Heart right ventricle (tissue), 16 donors: ENCODE measurements at regions of chrX and their contacts with region 1.

Region 1: GRCh38 chrX:101595739-101596419 is 21.9 kb downstream of the ARMCX6 start:
- DNase-seq: peak in 1 of 2 donors; percentile 49
- ATAC-seq: peak in 7 of 8 donors; percentile 46 to 73 (median 63)
- H3K4me3 ChIP-seq: no peak overlapping the region
- H3K27ac ChIP-seq: no peak overlapping the region
- H3K4me1 ChIP-seq: no peaks in the 10 kb centered on the region
- H3K27me3 ChIP-seq: peaks cover 0 to 28% (median 0%) of the 10 kb centered on the region in 7 donors
- CTCF ChIP-seq: peak; percentile 25 to 68 (median 57)

Region 2: DNA sequence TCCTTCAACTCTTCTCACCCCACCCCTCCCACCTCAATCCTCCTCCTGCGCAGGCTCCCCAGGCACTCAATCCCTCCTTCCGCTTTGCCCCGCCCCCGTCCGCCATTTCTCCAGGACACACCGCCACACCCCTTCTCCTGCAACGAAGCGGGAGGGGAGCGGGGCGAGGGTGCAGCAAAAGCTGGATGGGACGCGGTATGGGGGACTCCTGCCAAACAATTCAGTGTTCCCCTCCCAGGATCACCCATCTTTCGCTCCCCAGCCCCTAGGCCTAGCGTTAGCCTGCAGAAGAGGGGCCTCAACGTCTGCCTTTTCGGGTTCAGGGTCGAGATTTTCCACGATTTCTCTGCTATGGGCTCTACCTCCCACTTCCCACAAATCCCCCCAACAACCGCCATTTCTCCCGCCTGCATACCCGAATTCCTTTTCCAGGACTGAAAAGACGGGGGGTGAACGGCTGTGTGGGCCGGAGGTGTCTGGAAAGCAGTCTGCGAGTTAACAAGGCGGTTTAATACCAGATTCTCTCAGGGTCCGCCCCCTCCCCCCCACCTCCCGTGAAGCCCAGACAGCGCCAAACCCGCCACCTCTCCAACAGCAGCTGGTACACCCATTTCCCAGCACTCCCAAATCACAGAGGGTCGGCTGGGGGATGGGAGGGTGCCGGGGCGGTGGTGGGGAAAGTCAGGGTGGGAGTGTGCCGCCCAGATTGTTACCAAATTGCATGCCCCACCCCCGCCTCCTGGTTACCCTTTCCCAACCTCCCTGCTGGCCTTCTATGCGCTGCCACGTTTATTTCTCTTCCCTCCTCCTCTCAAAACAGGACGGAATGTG is 63.0 kb after region 1 on chrX:
- intact Hi-C with region 1: no loop called
- DNase-seq: peak; percentile 71 to 79
- ATAC-seq: peak; percentile 81 to 96 (median 94)
- H3K4me3 ChIP-seq: peak overlapping the region; percentile 18 to 70 (median 64)
- H3K27ac ChIP-seq: peak overlapping the region in 8 of 10 donors; percentile 52 to 78 (median 66)
- H3K4me1 ChIP-seq: peaks cover 0 to 11% (median 0%) of the 10 kb centered on the region in 9 donors
- H3K27me3 ChIP-seq: peaks cover 0 to 27% (median 0%) of the 10 kb centered on the region in 7 donors
- CTCF ChIP-seq: no peak

Region 3: GRCh38 chrX:101759000-101759399 is 163.1 kb after region 1 on chrX:
- intact Hi-C with region 1: loop called in 1 of 10 experiments (anchors 5 kb)
- DNase-seq: peak in 1 of 2 donors; percentile 23
- ATAC-seq: peak in 3 of 8 donors; percentile 39 to 66 (median 61)
- H3K4me3 ChIP-seq: no peak overlapping the region
- H3K27ac ChIP-seq: no peak overlapping the region
- H3K4me1 ChIP-seq: no peaks in the 10 kb centered on the region
- H3K27me3 ChIP-seq: peaks cover 0 to 54% (median 0%) of the 10 kb centered on the region in 7 donors
- CTCF ChIP-seq: peak in 7 of 9 donors; percentile 41 to 55 (median 47)

Region 4: DNA sequence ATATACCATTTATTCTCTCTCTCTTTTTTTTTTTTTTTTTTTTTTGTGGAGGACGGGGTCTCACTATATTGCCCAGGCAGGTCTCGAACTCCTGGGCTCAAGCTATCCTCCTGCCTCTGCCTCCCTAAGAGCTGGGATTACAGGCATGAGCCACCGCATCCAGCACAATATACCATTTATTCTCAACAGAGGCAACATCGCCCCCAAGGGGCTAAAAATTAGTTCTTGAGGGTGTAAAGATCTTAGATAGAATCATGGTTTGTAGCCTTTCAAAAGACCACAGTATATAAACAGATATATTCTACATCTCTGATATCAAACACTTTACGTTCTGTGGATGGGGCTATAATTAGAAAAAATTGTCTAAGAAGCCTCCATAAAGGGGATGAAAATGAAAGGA is 489.8 kb after region 1 on chrX:
- intact Hi-C with region 1: loop called in 1 of 10 experiments (anchors 10 kb)
- DNase-seq: no peak
- ATAC-seq: no peak
- H3K4me3 ChIP-seq: no peak overlapping the region
- H3K27ac ChIP-seq: no peak overlapping the region
- H3K4me1 ChIP-seq: no peaks in the 10 kb centered on the region
- H3K27me3 ChIP-seq: peaks cover 0 to 40% (median 0%) of the 10 kb centered on the region in 7 donors
- CTCF ChIP-seq: no peak